Dorsolateral prefrontal cortex (tissue), 120 donors: ENCODE measurements at regions of chr7 and their contacts with region 1.

Region 1: DNA sequence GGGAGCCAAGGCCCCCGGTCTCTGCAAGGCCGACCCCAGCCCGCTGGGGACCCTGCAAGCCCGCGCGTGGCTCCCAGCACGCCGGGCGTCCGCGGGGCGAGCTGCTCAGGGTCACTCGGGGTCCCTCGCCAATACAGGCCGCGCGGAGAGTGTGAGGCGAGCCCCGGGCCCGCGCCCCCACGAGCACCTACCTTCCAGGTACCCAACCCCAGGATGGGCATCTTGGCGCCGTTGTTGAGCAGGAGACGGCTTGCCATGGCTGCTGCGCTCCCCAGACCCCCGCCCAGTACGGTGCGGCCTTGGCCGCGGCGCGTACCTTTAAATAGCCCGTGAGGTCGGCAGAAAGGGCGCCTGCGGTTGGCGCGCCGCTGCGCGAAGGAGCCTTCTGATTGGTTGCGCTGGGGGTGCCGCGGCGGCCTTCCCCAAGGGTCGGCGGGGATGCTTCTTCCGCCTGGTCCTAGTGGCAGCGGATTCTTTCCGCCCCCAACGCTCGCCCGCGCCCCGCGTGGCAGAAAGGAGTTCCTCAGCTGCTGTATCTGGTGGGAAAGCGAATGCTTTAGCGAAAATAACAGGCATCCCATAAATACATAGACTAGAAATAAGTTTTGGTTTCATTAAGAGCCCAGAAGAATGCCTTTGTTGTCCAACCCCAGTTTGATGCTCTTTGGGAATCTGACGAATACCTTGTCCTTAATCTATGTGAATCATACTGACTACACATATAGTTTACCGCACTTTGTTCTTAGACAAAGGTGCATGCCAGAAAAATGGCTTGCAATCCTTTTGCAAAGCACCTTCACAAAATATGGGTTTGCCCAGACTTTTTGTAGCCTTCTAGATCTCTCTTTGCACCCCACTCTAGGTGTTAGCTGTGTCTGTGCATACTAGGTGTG is at the start of gene AKR1B1:
- DNase-seq: peak; percentile 81 to 96 (median 92)
- H3K4me3 ChIP-seq: peak within 1 kb of the TSS; percentile 58 to 99 (median 92)
- H3K27ac ChIP-seq: peak within 1 kb of the TSS; percentile 14 to 97 (median 87)
- H3K27me3 ChIP-seq: no peaks in the 10 kb centered on the region
- CTCF ChIP-seq: peak; percentile 33 to 88 (median 64)
- total RNA-seq, gene AKR1B1: 77.9 to 140 (median 103) TPM

Region 2: DNA sequence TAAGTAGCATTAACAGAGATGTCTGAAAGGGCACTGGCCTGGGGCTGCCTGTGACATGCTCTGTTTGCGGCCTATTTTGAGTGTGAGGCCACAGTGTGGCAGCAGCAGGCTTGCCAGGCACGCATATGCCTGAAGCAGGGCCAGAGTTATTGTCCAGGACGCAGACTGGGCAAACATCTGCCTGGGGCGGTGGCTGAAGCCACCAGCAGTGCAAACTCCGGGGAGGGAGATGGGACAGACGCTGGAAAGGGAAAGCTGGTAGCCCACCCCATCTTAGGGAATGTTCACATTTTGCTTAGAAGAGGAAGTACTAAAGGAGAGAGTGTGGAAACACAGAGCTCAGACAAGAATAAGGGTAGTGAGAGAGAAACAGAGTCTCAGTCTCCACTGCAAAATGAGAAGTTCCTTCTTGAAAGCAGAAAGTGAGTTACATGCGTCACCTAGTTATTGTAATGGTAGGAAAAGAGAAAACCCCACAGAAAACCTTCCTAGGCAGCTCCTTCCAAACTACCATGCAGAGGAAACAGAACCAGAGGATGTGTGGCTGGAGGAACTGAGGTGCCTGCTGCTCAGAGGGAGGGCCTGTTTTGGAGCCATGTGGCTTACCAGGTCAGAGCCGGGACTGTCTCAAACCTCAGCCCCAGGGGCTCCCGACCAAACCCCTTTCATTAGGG is 14.7 kb before region 1 on chr7:
- intact Hi-C with region 1: loop called in 1 of 2 experiments (anchors 1 kb)
- DNase-seq: peak in 8 of 10 donors; percentile 55 to 75 (median 61)
- H3K4me3 ChIP-seq: no peak overlapping the region
- H3K27ac ChIP-seq: peak overlapping the region in 55 of 59 donors; percentile 6 to 84 (median 70)
- H3K27me3 ChIP-seq: no peaks in the 10 kb centered on the region
- CTCF ChIP-seq: peak in 50 of 56 donors; percentile 17 to 76 (median 46)